Left cardiac atrium (tissue), 4 donors: ENCODE measurements at regions of chr18 and their contacts with region 1.

Region 1: DNA sequence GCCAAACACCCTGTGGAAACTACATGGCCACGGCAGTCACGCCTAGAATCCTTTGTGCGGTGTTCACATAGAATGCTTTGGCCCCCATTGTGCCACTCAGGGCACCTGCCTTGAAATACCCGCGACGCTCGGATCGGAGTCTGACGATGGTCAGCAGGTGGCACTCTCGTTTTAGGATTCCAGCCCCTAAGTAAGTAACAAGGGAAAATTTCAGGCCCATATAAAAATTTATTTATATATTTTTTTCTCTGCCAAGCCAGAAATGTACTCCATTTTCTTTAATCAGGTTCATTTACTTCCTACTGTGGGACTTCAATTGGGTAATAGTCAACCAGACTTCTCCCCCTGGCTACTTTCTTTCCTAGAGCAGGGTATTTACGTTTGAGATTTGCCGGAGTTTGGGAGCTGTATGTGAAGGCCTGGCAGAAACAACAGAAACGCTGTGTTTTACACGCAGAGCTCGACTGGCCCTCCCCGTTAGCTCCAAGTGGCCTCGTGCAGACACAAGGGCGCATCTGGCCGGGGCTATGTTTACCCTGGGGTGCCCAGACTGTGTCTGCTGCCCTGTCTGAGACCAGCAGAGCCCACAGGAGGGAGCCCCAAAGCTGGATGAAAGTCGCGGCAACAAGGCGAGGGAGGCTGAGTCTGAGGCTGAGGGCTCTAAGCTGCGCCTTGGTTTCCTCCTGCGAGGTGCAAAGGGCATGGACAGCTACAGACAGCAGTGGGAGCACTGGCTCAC is 41.6 kb downstream of the LRRC30 start:
- DNase-seq: peak; percentile 82
- ATAC-seq: peak; percentile 74 to 76

Region 2: DNA sequence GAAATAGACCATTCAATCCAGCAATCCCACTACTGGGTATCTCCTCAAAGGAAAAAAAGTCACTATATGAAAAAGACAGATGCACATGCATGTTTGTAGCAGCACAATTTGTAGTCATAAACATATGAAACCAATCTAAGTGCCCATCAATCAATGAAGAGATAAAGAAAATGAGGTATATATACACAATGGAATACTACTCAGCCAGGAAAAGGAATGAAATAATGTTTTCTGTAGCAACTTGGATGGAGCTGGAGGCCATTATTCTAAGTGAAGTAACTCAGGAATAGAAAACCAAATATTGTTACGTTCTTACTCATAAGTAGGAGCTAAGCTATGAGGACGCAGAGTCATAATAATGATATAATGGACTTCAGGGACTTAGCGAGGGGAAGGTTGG is 86.8 kb before region 1 on chr18:
- intact Hi-C with region 1: no loop called
- DNase-seq: no peak
- ATAC-seq: no peak

Region 3: GRCh38 chr18:7452331-7452730 is 179.9 kb after region 1 on chr18:
- intact Hi-C with region 1: loop called in 1 of 2 experiments (anchors 10 kb)
- DNase-seq: peak; percentile 23
- ATAC-seq: peak in 1 of 2 donors; percentile 75

Region 4: GRCh38 chr18:7512348-7512747 is 239.9 kb after region 1 on chr18:
- intact Hi-C with region 1: no loop called
- DNase-seq: no peak
- ATAC-seq: peak; percentile 16 to 23

Region 5: GRCh38 chr18:7566567-7567473 is 294.3 kb after region 1 on chr18 and contains the start of gene PTPRM:
- intact Hi-C with region 1: loop called (anchors 2 to 5 kb)
- DNase-seq: peak; percentile 93
- ATAC-seq: peak; percentile 90 to 93
- total RNA-seq, gene PTPRM: 51.4 to 75.5 TPM

Region 6: DNA sequence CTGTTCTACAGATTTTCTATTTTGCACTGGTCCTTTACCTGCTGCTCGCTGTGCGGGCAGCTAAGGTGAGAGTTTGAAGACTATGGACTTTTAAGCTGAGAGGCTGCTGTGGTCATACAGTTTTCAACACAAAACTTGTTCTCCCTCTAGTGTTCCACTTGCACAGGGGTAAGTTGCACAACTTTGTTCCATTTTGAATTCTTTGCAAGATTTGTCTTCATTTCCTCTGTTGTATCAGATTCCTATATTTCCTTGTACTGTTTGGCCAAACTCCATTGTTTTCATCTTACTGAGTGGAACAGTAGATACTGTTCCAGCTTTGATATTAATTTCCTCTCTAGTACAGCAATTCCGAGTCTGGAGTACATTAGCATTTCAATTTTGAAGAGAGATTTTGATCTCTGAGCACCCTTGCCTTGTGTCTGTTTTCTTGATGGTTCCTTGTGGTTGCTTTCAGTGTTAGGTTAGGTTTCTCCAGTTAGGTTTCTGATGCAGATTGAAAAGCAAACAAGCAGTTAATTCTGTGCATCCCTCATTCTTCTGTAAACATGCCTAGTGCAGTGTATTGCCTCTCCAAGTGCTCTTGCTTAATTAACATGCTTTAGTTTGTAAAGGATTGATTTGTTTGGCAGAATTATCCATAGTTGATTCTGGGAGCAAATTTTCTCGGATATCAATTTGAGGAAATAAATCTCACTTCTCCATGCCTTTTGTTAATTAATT is 483.4 kb after region 1 on chr18:
- intact Hi-C with region 1: loop called in 1 of 2 experiments (anchors 10 kb)
- DNase-seq: no peak
- ATAC-seq: peak; percentile 43 to 70

Region 7: GRCh38 chr18:8478166-8478967 is 1205.9 kb after region 1 on chr18:
- intact Hi-C with region 1: loop called in 1 of 2 experiments (anchors 5 kb)
- DNase-seq: peak; percentile 40
- ATAC-seq: peak; percentile 53 to 71